IMR-90 (cell line): ENCODE measurements at regions of chr10 and their contacts with region 1.

Region 1: GRCh38 chr10:132536971-132537712 is 445 bp upstream of the INPP5A start:
- DNase-seq: peak; percentile 98
- ATAC-seq: peak; percentile 93
- H3K4me3 ChIP-seq: peak overlapping the region; percentile 74
- H3K27ac ChIP-seq: peak overlapping the region; percentile 87
- H3K4me1 ChIP-seq: peaks cover 28% of the 10 kb centered on the region
- H3K27me3 ChIP-seq: no peaks in the 10 kb centered on the region
- CTCF ChIP-seq: peak; percentile 46
- POLR2A ChIP-seq: no peak
- RAD21 ChIP-seq: peak; percentile 20

Region 2: GRCh38 chr10:132458593-132459300 is 78.4 kb before region 1 on chr10:
- CTCF ChIA-PET with region 1: interaction called, 4 read pairs
- POLR2A ChIA-PET with region 1: no interaction called
- dilution Hi-C with region 1: no loop called
- in situ Hi-C with region 1: no loop called
- intact Hi-C with region 1: loop called (anchors 2 kb)
- DNase-seq: no peak
- ATAC-seq: peak; percentile 95
- H3K4me3 ChIP-seq: no peak overlapping the region
- H3K27ac ChIP-seq: no peak overlapping the region
- H3K4me1 ChIP-seq: no peaks in the 10 kb centered on the region
- H3K27me3 ChIP-seq: peaks cover 9% of the 10 kb centered on the region; the same call in 1 of the 2 replicates
- CTCF ChIP-seq: peak; percentile 91
- POLR2A ChIP-seq: no peak
- RAD21 ChIP-seq: peak; percentile 97

Region 3: GRCh38 chr10:132516771-132517725 is 20.1 kb before region 1 on chr10:
- CTCF ChIA-PET with region 1: no interaction called
- POLR2A ChIA-PET with region 1: no interaction called
- dilution Hi-C with region 1: no loop called
- in situ Hi-C with region 1: no loop called
- intact Hi-C with region 1: loop called (anchors 1 kb)
- DNase-seq: peak; percentile 96
- ATAC-seq: peak; percentile 97
- H3K4me3 ChIP-seq: no peak overlapping the region
- H3K27ac ChIP-seq: peak overlapping the region; percentile 75
- H3K4me1 ChIP-seq: peaks cover 27% of the 10 kb centered on the region
- H3K27me3 ChIP-seq: no peaks in the 10 kb centered on the region
- CTCF ChIP-seq: no peak
- POLR2A ChIP-seq: no peak
- RAD21 ChIP-seq: peak; percentile 27

Region 4: GRCh38 chr10:132575356-132576201 is 38.4 kb after region 1 on chr10:
- CTCF ChIA-PET with region 1: no interaction called
- POLR2A ChIA-PET with region 1: no interaction called
- dilution Hi-C with region 1: no loop called
- in situ Hi-C with region 1: no loop called
- intact Hi-C with region 1: loop called (anchors 5 kb)
- DNase-seq: peak; percentile 91
- ATAC-seq: peak; percentile 89
- H3K4me3 ChIP-seq: no peak overlapping the region
- H3K27ac ChIP-seq: no peak overlapping the region
- H3K4me1 ChIP-seq: peaks cover 24% of the 10 kb centered on the region
- H3K27me3 ChIP-seq: peaks cover 2% of the 10 kb centered on the region; the same call in 1 of the 2 replicates
- CTCF ChIP-seq: no peak
- POLR2A ChIP-seq: no peak
- RAD21 ChIP-seq: no peak